ENCODE measurements at regions of chr1 and their contacts with region 1.

Region 1: GRCh38 chr1:24955161-24955560 is 25.1 kb upstream of the RUNX3 start:
- DNase-seq: peak in 8 of 9 experiments; percentile 56 to 88 (median 72)
- ATAC-seq: peak; percentile 82
- H3K4me3 ChIP-seq: peak overlapping the region in 1 of 2 experiments; percentile 2
- H3K4me3 Mint-ChIP-seq: peak overlapping the region; percentile 37
- H3K27ac ChIP-seq: peak overlapping the region in 1 of 2 experiments; percentile 23
- H3K27ac Mint-ChIP-seq: peak overlapping the region; percentile 93
- H3K4me1 ChIP-seq: peaks cover 76% of the 10 kb centered on the region
- H3K4me1 Mint-ChIP-seq: peaks cover 83% of the 10 kb centered on the region
- H3K27me3 ChIP-seq: no peaks in the 10 kb centered on the region
- H3K27me3 Mint-ChIP-seq: no peaks in the 10 kb centered on the region
- CTCF ChIP-seq: no peak

Region 2: DNA sequence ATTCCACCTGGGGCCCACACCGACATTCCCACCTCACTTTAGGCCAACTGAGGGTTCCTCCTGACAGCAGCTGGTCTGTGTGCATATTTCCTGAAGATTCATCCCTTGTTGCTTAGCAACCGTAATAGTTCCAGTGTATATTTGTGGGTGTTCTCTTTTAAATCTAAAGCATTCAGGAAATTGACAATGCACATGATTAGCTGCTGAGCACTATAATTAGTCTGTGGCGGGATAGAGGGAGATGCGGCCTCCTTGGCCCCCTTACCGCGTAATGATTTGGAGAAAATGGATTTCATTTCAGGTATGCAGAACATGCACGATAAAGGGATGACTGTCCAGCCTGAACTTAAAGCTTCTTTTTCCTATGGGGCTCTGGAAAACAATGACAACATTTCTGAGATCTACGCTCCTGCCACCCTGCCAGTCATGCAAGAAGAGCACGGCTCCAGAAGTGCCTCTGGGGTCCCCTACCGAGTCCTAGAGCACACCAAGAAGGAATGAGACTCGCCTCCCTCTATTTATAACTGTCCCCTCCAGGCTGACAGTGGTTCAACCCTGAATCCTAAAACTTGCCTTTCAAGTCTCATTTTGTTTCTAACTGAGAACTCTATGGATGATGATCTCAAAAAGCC is 486.4 kb before region 1 on chr1:
- CTCF ChIA-PET with region 1: no interaction called
- POLR2A ChIA-PET with region 1: no interaction called
- intact Hi-C with region 1: no loop called
- DNase-seq: no peak
- ATAC-seq: no peak
- H3K4me3 ChIP-seq: no peak overlapping the region
- H3K4me3 Mint-ChIP-seq: no peak overlapping the region
- H3K27ac ChIP-seq: no peak overlapping the region
- H3K27ac Mint-ChIP-seq: no peak overlapping the region
- H3K4me1 ChIP-seq: peaks cover 10% of the 10 kb centered on the region
- H3K4me1 Mint-ChIP-seq: peaks cover 20% of the 10 kb centered on the region
- H3K27me3 ChIP-seq: no peaks in the 10 kb centered on the region
- H3K27me3 Mint-ChIP-seq: no peaks in the 10 kb centered on the region
- CTCF ChIP-seq: no peak

Region 3: GRCh38 chr1:25148673-25149300 is 193.6 kb after region 1 on chr1:
- CTCF ChIA-PET with region 1: no interaction called
- POLR2A ChIA-PET with region 1: no interaction called
- intact Hi-C with region 1: loop called in 1 of 2 experiments (anchors 5 kb)
- DNase-seq: peak in 5 of 9 experiments; percentile 29 to 78 (median 34)
- ATAC-seq: peak; percentile 73
- H3K4me3 ChIP-seq: no peak overlapping the region
- H3K4me3 Mint-ChIP-seq: no peak overlapping the region
- H3K27ac ChIP-seq: no peak overlapping the region
- H3K27ac Mint-ChIP-seq: no peak overlapping the region
- H3K4me1 ChIP-seq: no peaks in the 10 kb centered on the region
- H3K4me1 Mint-ChIP-seq: peaks cover 4% of the 10 kb centered on the region
- H3K27me3 ChIP-seq: no peaks in the 10 kb centered on the region
- H3K27me3 Mint-ChIP-seq: peaks cover 13% of the 10 kb centered on the region
- CTCF ChIP-seq: peak; percentile 69